ENCODE measurements at regions of chr3 and their contacts with region 1.

Region 1: GRCh38 chr3:136171097-136171542 is 25.0 kb downstream of the MSL2 start:
- DNase-seq: no peak
- H3K4me3 ChIP-seq: no peak overlapping the region
- H3K27ac ChIP-seq: peak overlapping the region; percentile 2
- H3K4me1 ChIP-seq: peaks cover 11% of the 10 kb centered on the region
- CTCF ChIP-seq: no peak

Region 2: DNA sequence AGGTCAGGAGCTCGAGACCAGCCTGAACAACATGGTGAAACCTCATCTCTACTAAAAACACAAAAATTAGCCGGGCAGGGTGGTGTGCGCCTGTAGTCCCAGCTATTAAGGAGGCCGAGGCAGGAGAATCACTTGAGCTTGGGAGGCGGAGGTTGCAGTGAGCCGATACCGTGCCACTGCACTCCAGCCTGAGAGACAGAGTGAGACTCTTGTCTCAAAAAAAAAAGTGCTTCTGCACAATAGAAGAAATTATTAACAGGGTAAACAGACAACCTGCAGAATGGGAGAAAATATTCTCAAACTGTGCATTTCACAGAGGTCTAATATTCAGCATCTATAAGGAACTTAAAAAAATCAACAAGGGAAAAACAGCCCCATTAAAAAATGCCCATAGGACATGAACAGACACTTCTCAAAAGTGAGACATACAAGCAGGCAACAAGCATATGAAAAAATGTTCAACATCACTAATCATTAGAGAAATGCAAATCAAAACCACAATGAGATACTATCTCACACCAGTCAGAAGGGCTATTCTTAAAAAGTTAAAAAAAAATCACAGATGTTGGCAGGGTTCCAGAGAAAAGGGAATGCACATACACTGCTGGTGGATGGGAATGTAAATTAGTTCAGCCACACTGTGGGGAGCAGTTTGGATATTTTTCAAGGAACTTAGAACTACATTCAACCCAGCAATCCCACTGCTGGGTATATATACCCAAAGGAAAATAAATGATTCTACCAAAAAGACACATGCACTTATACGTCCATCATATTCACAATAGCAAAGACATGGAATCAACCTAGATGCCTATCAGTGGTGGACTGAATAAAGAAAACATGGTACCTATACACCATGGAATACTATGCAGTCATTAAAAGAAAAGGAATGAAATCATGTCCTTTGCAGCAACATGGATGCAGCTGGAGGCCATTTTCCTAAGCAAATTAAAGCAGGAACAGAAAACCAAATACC is 50.5 kb before region 1 on chr3:
- CTCF ChIA-PET with region 1: no interaction called
- POLR2A ChIA-PET with region 1: no interaction called
- intact Hi-C with region 1: no loop called
- DNase-seq: no peak
- H3K4me3 ChIP-seq: no peak overlapping the region
- H3K27ac ChIP-seq: no peak overlapping the region
- H3K4me1 ChIP-seq: peaks cover 4% of the 10 kb centered on the region
- CTCF ChIP-seq: no peak

Region 3: GRCh38 chr3:136209921-136210320 is 38.8 kb after region 1 on chr3:
- CTCF ChIA-PET with region 1: no interaction called
- POLR2A ChIA-PET with region 1: interaction called, 5 read pairs
- intact Hi-C with region 1: loop called (anchors 1 kb)
- DNase-seq: no peak
- H3K4me3 ChIP-seq: no peak overlapping the region
- H3K27ac ChIP-seq: no peak overlapping the region
- H3K4me1 ChIP-seq: no peaks in the 10 kb centered on the region
- CTCF ChIP-seq: no peak

Measured in OCI-LY7 (cell line).